PC-3 (cell line): ENCODE measurements at regions of chr14 and their contacts with region 1.

Region 1: GRCh38 chr14:41609704-41610183 is 3.1 kb downstream of the LRFN5 start:
- DNase-seq: peak; percentile 56
- ATAC-seq: peak; percentile 97
- H3K4me3 ChIP-seq: peak overlapping the region; percentile 53
- H3K27ac ChIP-seq: no peak overlapping the region
- H3K4me1 ChIP-seq: no peaks in the 10 kb centered on the region
- H3K27me3 ChIP-seq: peaks cover 73% of the 10 kb centered on the region
- CTCF ChIP-seq: peak; percentile 56

Region 2: DNA sequence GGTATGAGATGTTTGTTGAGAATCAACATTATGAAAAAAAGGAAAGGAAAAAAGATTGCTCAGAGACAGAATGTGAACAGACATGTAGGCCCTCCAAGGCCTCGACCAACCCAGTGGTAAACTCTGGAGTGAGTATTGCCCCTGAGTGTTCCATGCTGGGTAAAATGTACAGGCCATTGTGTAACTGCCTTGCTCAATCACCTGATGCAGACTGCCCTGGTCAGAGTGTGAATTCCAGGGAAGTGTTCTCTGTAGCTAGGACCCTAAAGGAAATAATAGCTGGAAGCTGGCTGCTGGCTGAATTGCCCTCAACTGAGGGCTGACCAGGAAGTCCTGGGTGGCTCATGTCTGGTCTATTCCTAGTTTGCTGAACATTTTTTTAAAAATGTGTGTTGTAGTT is 1084.4 kb before region 1 on chr14:
- CTCF ChIA-PET with region 1: no interaction called
- POLR2A ChIA-PET with region 1: no interaction called
- intact Hi-C with region 1: no loop called
- DNase-seq: no peak
- ATAC-seq: no peak
- H3K4me3 ChIP-seq: no peak overlapping the region
- H3K27ac ChIP-seq: no peak overlapping the region
- H3K4me1 ChIP-seq: no peaks in the 10 kb centered on the region
- H3K27me3 ChIP-seq: no peaks in the 10 kb centered on the region
- CTCF ChIP-seq: no peak

Region 3: GRCh38 chr14:41349289-41349900 is 260.3 kb before region 1 on chr14:
- CTCF ChIA-PET with region 1: no interaction called
- POLR2A ChIA-PET with region 1: no interaction called
- intact Hi-C with region 1: no loop called
- DNase-seq: no peak
- ATAC-seq: peak; percentile 22; the same call in 1 of the 2 replicates
- H3K4me3 ChIP-seq: no peak overlapping the region
- H3K27ac ChIP-seq: no peak overlapping the region
- H3K4me1 ChIP-seq: no peaks in the 10 kb centered on the region
- H3K27me3 ChIP-seq: no peaks in the 10 kb centered on the region
- CTCF ChIP-seq: no peak

Region 4: DNA sequence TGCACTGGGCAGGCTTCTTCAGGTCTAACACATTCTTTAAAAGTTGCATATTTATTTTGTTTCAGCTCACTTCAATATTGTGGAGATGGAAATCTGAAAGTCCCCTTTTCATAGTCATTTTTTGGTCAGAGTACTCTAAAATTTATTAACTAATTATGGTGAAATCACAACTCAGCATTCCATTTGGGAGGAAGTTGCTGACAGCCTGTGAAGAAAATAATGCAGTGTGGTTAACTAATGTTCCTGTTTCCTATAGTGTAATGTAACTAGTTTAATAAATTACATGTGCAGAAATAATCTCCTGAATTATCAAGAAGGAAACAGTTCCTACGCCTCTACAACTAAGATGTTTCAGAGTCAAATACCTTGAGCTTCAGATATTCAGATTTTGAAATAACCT is 14.0 kb after region 1 on chr14:
- CTCF ChIA-PET with region 1: no interaction called
- POLR2A ChIA-PET with region 1: no interaction called
- intact Hi-C with region 1: no loop called
- DNase-seq: no peak
- ATAC-seq: no peak
- H3K4me3 ChIP-seq: no peak overlapping the region
- H3K27ac ChIP-seq: no peak overlapping the region
- H3K4me1 ChIP-seq: no peaks in the 10 kb centered on the region
- H3K27me3 ChIP-seq: no peaks in the 10 kb centered on the region
- CTCF ChIP-seq: no peak

Region 5: DNA sequence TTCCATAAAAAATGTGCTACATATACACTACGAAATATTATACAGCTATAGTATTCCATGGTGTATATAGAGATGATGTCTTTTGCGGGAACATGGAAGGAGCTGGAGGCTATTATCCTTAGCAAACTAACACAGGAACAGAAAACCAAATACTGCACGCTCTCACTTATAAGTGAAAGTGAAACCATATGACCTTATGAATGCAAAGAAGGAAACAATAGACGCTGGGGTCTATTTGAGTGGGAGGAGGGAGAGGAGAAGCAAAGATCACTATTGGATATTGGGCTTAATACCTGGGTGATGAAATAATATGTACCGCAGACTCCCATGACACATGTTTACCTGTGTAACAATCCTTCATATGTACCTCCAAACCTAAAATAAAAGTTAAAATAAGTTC is 139.7 kb after region 1 on chr14:
- CTCF ChIA-PET with region 1: no interaction called
- POLR2A ChIA-PET with region 1: no interaction called
- intact Hi-C with region 1: loop called (anchors 5 kb)
- DNase-seq: peak; percentile 34
- ATAC-seq: peak; percentile 70
- H3K4me3 ChIP-seq: peak overlapping the region; percentile 59
- H3K27ac ChIP-seq: no peak overlapping the region
- H3K4me1 ChIP-seq: no peaks in the 10 kb centered on the region
- H3K27me3 ChIP-seq: no peaks in the 10 kb centered on the region
- CTCF ChIP-seq: no peak

Region 6: DNA sequence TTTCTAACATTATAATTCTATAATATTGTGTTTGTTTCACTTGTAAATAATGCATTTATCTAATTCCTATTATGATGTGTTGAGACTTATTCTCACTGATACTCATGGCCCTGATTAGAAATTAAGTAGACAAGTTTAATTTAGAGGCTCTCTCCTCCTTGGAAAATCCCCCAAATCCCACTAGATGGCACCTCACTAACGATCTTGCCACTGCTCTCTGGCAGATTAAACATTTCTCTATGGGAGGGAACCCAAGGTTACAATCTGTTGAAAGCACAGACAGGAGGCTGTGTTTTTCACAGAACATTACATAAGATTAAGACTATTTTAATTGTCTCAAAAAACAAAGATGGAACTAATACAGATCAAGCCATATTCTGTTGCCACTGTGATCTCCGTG is 315.7 kb after region 1 on chr14:
- CTCF ChIA-PET with region 1: interaction called, 6 read pairs
- POLR2A ChIA-PET with region 1: no interaction called
- intact Hi-C with region 1: loop called (anchors 2 kb)
- DNase-seq: peak; percentile 63
- ATAC-seq: peak; percentile 97
- H3K4me3 ChIP-seq: no peak overlapping the region
- H3K27ac ChIP-seq: no peak overlapping the region
- H3K4me1 ChIP-seq: no peaks in the 10 kb centered on the region
- H3K27me3 ChIP-seq: no peaks in the 10 kb centered on the region
- CTCF ChIP-seq: peak; percentile 73

Region 7: GRCh38 chr14:42023447-42023846 is 413.7 kb after region 1 on chr14:
- CTCF ChIA-PET with region 1: interaction called, 3 read pairs
- POLR2A ChIA-PET with region 1: no interaction called
- intact Hi-C with region 1: loop called (anchors 10 kb)
- DNase-seq: peak; percentile 65
- ATAC-seq: peak; percentile 94
- H3K4me3 ChIP-seq: no peak overlapping the region
- H3K27ac ChIP-seq: no peak overlapping the region
- H3K4me1 ChIP-seq: no peaks in the 10 kb centered on the region
- H3K27me3 ChIP-seq: no peaks in the 10 kb centered on the region
- CTCF ChIP-seq: no peak

Region 8: GRCh38 chr14:42192743-42193653 is 583.3 kb after region 1 on chr14:
- CTCF ChIA-PET with region 1: interaction called, 4 read pairs
- POLR2A ChIA-PET with region 1: no interaction called
- intact Hi-C with region 1: loop called (anchors 1 kb)
- DNase-seq: peak; percentile 98
- ATAC-seq: peak; percentile 85
- H3K4me3 ChIP-seq: peak overlapping the region; percentile 46; the same call in 1 of the 2 replicates
- H3K27ac ChIP-seq: peak overlapping the region; percentile 95
- H3K4me1 ChIP-seq: peaks cover 37% of the 10 kb centered on the region
- H3K27me3 ChIP-seq: no peaks in the 10 kb centered on the region
- CTCF ChIP-seq: no peak

Region 9: DNA sequence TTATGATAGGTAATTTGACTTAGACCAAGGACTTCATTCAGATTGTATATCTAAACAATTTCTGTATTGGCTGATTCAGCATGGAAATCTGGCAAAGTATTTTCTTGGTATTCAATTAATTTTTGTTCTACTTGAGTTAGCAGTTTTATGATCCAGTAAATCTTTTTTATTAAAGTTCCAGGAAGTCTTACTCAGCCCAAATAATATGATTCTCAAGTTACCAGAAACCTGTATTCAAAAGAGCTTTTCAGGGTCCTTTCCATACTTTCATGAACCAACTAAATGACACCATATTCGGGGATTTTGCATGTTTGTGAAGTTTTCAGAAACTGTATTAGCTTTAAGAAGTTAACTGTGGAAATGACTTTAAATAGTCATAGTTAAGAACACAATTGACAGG is 659.5 kb after region 1 on chr14:
- CTCF ChIA-PET with region 1: no interaction called
- POLR2A ChIA-PET with region 1: no interaction called
- intact Hi-C with region 1: loop called (anchors 5 kb)
- DNase-seq: peak; percentile 32
- ATAC-seq: peak; percentile 94
- H3K4me3 ChIP-seq: no peak overlapping the region
- H3K27ac ChIP-seq: no peak overlapping the region
- H3K4me1 ChIP-seq: peaks cover 10% of the 10 kb centered on the region
- H3K27me3 ChIP-seq: no peaks in the 10 kb centered on the region
- CTCF ChIP-seq: no peak